AG04450 (cell line): ENCODE measurements at regions of chr12 and their contacts with region 1.

Region 1: DNA sequence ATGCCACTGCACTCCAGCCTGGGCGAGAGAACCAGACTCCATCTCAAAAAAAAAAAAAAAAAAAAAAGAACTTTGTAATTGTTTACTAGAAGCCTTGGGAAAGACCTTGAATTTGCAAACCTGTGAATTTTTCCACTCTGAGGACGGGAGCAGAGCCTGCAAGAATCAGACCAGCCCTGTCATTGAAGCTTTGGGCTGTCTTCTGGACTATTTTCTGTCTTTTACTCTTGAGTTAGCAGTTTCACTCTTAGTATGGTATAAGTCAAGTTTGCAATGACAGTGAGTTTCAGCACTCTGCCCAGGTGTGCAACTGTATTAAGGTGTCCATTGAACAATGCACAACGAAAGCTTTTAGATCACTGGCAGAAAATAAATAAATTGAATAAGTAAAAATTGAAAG is 81.4 kb upstream of the KRAS start:
- DNase-seq: no peak
- H3K4me3 ChIP-seq: no peak overlapping the region
- H3K27ac ChIP-seq: no peak overlapping the region
- H3K27me3 ChIP-seq: no peaks in the 10 kb centered on the region
- CTCF ChIP-seq: no peak

Region 2: GRCh38 chr12:25308756-25309155 is 23.4 kb before region 1 on chr12:
- CTCF ChIA-PET with region 1: no interaction called
- POLR2A ChIA-PET with region 1: interaction called, 10 read pairs
- DNase-seq: peak; percentile 29
- H3K4me3 ChIP-seq: no peak overlapping the region
- H3K27ac ChIP-seq: no peak overlapping the region
- H3K27me3 ChIP-seq: no peaks in the 10 kb centered on the region
- CTCF ChIP-seq: no peak